ENCODE measurements at regions of chr3 and their contacts with region 1.

Region 1: GRCh38 chr3:99842826-99843589 is 25.3 kb downstream of the CMSS1 start:
- DNase-seq: peak in 1 of 2 experiments; percentile 53
- ATAC-seq: peak; percentile 78 to 86; a peak in 5 of 6 replicates
- H3K4me3 ChIP-seq: no peak overlapping the region
- H3K27ac ChIP-seq: no peak overlapping the region
- H3K4me1 ChIP-seq: no peaks in the 10 kb centered on the region; the same call in 2 of the 3 replicates
- CTCF ChIP-seq: peak; percentile 87
- EP300 ChIP-seq: no peak
- POLR2A ChIP-seq: no peak
- RAD21 ChIP-seq: peak; percentile 85 to 91

Region 2: GRCh38 chr3:99439892-99440291 is 403.1 kb before region 1 on chr3:
- CTCF ChIA-PET with region 1: no interaction called
- POLR2A ChIA-PET with region 1: no interaction called
- DNase-seq: no peak
- ATAC-seq: no peak
- H3K4me3 ChIP-seq: no peak overlapping the region
- H3K27ac ChIP-seq: no peak overlapping the region
- H3K4me1 ChIP-seq: no peaks in the 10 kb centered on the region
- CTCF ChIP-seq: no peak
- EP300 ChIP-seq: no peak
- POLR2A ChIP-seq: no peak
- RAD21 ChIP-seq: no peak

Region 3: DNA sequence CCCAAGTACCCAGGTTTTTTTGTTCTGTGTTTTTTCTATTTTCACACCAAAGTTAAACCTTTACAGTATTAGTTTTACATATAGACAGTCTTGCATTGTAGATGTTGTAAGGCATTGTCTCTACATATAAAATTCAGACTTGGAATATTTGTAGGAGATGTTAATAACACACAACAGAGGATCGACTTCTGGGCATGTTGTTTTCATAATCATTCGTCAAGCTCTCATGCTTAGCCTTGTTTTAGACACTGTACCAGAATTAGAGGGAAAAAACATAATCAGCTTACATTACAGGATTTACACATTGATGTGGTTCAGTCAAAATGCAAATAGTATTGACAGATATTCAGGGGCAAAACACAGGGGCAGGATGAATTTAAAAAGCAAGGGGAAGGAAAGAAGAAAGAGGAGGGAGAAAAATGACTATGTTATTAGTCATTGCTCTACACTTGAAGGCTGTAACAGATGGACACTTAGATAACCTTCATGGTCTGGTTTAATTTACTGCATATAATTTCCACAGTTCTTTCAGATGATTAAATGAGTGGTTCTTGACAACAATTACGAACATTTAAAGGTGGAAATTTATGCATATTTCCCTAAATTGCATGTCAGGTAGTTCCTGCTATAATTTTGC is 17.9 kb before region 1 on chr3:
- CTCF ChIA-PET with region 1: interaction called, 17 read pairs
- POLR2A ChIA-PET with region 1: no interaction called
- DNase-seq: no peak
- ATAC-seq: peak; percentile 54 to 59; a peak in 4 of 6 replicates
- H3K4me3 ChIP-seq: no peak overlapping the region
- H3K27ac ChIP-seq: no peak overlapping the region
- H3K4me1 ChIP-seq: peaks cover 17% of the 10 kb centered on the region
- CTCF ChIP-seq: no peak
- EP300 ChIP-seq: no peak
- POLR2A ChIP-seq: no peak
- RAD21 ChIP-seq: no peak

Region 4: DNA sequence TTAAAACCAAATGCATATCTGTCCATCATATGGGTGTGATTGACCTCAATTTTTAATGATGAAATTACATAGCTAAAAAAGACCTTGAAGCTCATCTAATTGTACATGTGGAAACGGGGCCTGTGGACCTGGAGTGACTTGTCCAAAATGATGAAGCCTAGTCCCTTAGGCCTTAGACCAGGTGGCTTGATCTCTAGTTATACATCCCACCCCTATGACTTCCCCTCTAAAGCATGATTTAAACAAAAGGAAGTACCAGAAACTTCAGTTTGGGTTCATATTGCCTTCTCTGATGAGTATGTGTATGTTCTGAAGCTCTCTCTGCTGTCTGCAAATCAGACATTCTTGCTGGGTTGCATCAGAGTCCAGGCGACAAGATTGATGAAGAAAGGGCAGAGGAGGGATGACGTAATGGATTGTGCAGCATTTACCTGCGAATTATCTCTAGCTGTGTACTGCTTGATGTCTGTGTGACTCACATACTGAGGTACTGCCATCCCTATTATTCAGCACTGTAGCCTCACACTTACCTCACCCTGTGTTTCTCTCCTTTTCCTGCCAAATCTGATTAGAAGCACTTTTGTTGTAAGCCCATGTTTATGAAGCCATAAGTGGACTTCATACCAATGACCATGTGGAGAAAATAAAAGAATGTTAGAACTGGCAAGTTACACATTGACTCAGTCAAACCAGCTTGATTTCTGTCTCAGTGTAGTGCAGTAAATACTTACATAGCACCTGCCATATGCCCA is 159.8 kb after region 1 on chr3:
- CTCF ChIA-PET with region 1: interaction called, 15 read pairs
- POLR2A ChIA-PET with region 1: no interaction called
- DNase-seq: peak; percentile 47 to 82
- ATAC-seq: peak; percentile 94 to 95
- H3K4me3 ChIP-seq: no peak overlapping the region
- H3K27ac ChIP-seq: peak overlapping the region; percentile 63 to 75
- H3K4me1 ChIP-seq: peaks cover 40% of the 10 kb centered on the region
- CTCF ChIP-seq: no peak
- EP300 ChIP-seq: peak; percentile 59 to 61; a peak in 4 of 5 replicates
- POLR2A ChIP-seq: no peak
- RAD21 ChIP-seq: 0 out of 5 replicates have a peak, but pooled peaks of 1 of the 2 experiments have one; percentile 36

Region 5: GRCh38 chr3:100238599-100238998 is 395.6 kb after region 1 on chr3:
- CTCF ChIA-PET with region 1: interaction called, 11 read pairs
- POLR2A ChIA-PET with region 1: no interaction called
- DNase-seq: no peak
- ATAC-seq: no peak
- H3K4me3 ChIP-seq: no peak overlapping the region
- H3K27ac ChIP-seq: no peak overlapping the region
- H3K4me1 ChIP-seq: no peaks in the 10 kb centered on the region
- CTCF ChIP-seq: no peak
- EP300 ChIP-seq: no peak
- POLR2A ChIP-seq: no peak
- RAD21 ChIP-seq: no peak

Region 6: DNA sequence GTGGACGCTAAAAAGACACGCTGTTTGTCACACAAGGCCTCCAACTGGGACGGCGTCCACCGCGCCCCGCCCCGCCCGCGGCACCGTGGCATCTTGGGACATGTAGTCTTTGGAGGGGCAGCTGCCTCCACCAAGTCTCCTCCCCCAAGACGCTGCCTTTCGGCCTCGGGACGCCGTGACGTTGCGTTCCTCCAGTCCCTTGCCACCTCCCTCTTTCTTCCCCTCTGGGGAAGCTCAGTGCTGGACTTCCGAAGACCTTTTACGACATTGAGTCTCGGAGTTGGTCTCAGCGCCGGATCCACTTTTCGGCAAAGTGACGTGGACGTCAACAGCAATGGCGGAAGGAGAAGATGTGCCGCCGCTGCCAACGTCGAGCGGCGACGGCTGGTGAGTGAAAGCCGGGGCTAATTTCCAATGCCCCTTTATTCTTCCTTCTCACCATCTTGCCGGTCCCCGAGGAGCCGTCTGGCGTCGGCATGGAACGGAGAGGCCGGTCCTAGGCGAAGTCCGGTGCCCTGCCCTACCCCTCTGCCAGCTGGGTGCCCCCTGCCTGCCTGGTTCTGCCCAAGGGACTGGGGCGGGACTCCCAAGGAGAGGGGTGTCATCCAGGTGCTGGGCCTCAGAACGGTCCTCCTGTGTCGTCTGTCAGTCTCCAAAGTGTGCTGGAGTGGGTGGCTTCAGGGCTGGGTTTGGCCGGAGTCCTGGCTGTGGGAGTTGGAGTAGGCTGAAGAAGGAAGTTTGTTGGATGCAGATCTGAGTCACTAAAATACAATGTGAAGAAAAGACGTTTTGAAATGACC is 417.9 kb after region 1 on chr3 and contains the start of gene TBC1D23:
- CTCF ChIA-PET with region 1: interaction called, 74 read pairs
- POLR2A ChIA-PET with region 1: interaction called, 3 read pairs
- DNase-seq: peak; percentile 98 to 100
- ATAC-seq: peak; percentile 100
- H3K4me3 ChIP-seq: peak within 1 kb of the TSS; percentile 88
- H3K27ac ChIP-seq: peak within 1 kb of the TSS; percentile 91 to 94
- H3K4me1 ChIP-seq: peaks cover 10% of the 10 kb centered on the region; the same call in 2 of the 3 replicates
- CTCF ChIP-seq: no peak
- EP300 ChIP-seq: no peak
- POLR2A ChIP-seq: peak; percentile 59
- RAD21 ChIP-seq: no peak
- polyA plus RNA-seq, gene TBC1D23: 29.4 and 31.3 TPM in 2 replicates